ENCODE measurements at regions of chr10 and their contacts with region 1.

Region 1: GRCh38 chr10:995559-995926 is 7.3 kb downstream of the GTPBP4 start:
- DNase-seq: no peak
- H3K4me3 ChIP-seq: no peak overlapping the region
- H3K27ac ChIP-seq: no peak overlapping the region
- H3K4me1 ChIP-seq: no peaks in the 10 kb centered on the region
- H3K27me3 ChIP-seq: no peaks in the 10 kb centered on the region
- CTCF ChIP-seq: no peak
- POLR2A ChIP-seq: no peak

Region 2: DNA sequence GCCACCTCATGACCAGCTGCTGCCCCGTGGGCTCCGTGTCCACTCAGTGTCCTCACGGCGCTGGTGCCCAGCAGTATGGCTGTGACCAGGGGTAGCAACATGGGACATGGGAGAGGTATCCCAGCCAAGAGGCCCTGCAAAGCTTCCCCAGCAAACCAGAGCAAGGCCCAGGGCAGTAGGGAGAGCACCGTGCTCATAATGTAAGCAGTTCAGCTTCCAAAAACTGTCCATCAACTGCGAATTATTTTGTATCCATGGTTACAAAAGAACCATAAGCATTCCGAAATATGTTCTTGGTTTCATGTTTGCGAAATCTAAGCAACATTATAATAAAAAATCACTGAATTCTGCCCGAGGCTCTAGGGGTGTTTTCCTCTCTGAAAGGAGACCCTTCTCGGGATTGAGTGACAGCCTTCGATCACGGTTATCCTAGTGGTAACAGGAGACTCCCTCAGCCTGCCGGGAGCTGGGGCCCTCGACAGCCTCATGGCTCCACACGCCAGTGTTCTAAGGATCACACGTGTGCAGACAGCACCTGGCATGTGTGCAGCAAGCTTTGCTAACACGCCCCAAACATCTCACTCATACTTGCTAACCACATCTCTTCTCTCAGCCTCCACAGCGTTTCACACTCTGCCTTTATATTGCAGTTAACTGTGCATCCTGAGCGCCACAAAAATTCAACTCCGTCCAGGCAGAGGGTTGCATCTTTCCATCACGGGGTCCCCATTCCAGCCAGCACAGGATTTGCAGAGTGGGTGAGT is 423.7 kb before region 1 on chr10:
- intact Hi-C with region 1: no loop called
- DNase-seq: no peak
- H3K4me3 ChIP-seq: no peak overlapping the region
- H3K27ac ChIP-seq: no peak overlapping the region
- H3K4me1 ChIP-seq: no peaks in the 10 kb centered on the region
- H3K27me3 ChIP-seq: no peaks in the 10 kb centered on the region
- CTCF ChIP-seq: no peak
- POLR2A ChIP-seq: no peak

Region 3: GRCh38 chr10:1040133-1040532 is 44.6 kb after region 1 on chr10:
- intact Hi-C with region 1: loop called (anchors 2 kb)
- DNase-seq: no peak
- H3K4me3 ChIP-seq: no peak overlapping the region
- H3K27ac ChIP-seq: no peak overlapping the region
- H3K4me1 ChIP-seq: peaks cover 0 to 5% of the 10 kb centered on the region in 2 donors
- H3K27me3 ChIP-seq: no peaks in the 10 kb centered on the region
- CTCF ChIP-seq: no peak
- POLR2A ChIP-seq: no peak